Transverse colon (tissue), 4 donors: ENCODE measurements at regions of chr17 and their contacts with region 1.

Region 1: GRCh38 chr17:28252436-28252835 is 66.6 kb upstream of the TMEM97 start:
- DNase-seq: no peak
- H3K4me3 ChIP-seq: no peak overlapping the region
- H3K27ac ChIP-seq: no peak overlapping the region
- H3K4me1 ChIP-seq: peaks cover 4 to 8% (median 6%) of the 10 kb centered on the region in 4 donors
- H3K27me3 ChIP-seq: peaks cover 9% of the 10 kb centered on the region
- CTCF ChIP-seq: no peak
- EP300 ChIP-seq: no peak
- POLR2A ChIP-seq: no peak

Region 2: DNA sequence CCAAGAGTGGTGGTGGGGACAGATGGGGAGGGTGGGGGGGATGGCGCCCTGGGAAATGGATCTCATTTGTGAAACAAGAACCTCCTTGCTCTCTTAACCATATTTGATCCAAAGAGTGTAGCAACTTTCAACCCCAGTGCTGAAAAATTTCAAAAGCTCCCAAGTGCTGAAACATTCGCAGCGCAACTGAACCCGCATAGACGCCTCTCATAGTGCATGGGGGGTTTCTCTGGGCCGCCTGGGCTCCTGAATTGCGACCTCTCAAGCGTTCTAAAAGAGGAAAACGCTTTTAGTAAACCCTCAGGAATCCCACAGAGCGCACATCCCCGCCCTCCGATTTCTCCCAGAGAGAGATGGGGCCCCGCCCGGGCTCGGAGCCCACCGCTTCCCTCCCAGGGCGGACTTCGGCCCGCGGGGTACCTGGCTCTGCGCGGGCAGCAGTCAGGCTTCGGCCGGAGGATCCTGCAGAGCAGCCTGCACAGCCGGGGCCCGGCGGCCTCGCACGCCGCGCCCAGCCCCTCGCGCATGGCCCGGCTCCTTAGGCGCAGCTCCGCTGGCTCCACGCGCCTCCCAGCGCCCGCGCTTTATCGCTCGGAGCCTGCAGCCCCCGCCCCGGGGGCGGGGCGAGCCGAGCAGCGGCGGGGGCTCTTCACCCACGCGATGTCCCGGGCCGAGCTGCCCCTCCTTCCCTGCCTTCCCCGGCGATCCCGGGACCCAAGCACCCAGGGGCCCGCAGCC is 459.1 kb before region 1 on chr17:
- in situ Hi-C with region 1: loop called (anchors 25 kb)
- intact Hi-C with region 1: no loop called
- DNase-seq: no peak
- H3K4me3 ChIP-seq: peak overlapping the region in 2 of 4 donors; percentile 28 to 42
- H3K27ac ChIP-seq: no peak overlapping the region
- H3K4me1 ChIP-seq: peaks cover 0 to 20% (median 11%) of the 10 kb centered on the region in 4 donors
- H3K27me3 ChIP-seq: peaks cover 30% of the 10 kb centered on the region
- CTCF ChIP-seq: no peak
- EP300 ChIP-seq: no peak
- POLR2A ChIP-seq: no peak

Region 3: GRCh38 chr17:27805520-27806146 is 446.8 kb before region 1 on chr17:
- in situ Hi-C with region 1: no loop called
- intact Hi-C with region 1: loop called (anchors 10 kb)
- DNase-seq: peak; percentile 89
- H3K4me3 ChIP-seq: peak overlapping the region in 2 of 4 donors; percentile 12 to 35
- H3K27ac ChIP-seq: peak overlapping the region; percentile 46 to 60 (median 58)
- H3K4me1 ChIP-seq: peaks cover 5 to 34% (median 19%) of the 10 kb centered on the region in 4 donors
- H3K27me3 ChIP-seq: no peaks in the 10 kb centered on the region
- CTCF ChIP-seq: peak; percentile 82 to 96 (median 85)
- EP300 ChIP-seq: no peak
- POLR2A ChIP-seq: no peak

Region 4: DNA sequence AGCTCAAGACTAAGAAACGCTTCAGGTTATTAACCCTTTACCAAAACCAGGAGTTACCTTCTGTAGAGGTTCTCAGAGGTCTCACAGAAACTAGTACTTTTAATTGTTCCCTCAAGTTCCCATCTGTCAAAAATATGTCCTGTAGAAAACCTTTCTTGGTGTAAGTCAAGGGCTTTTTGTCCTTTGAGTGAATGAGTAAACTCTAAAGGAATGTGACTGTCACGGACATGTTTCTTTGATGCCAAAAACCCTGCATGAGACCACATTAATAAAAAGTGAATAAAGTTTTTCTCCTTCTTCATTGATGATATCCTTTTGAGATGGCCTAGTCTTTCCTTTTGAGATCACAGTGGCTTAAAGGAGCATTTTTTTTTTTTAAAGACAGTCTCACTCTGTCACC is 107.1 kb before region 1 on chr17:
- in situ Hi-C with region 1: no loop called
- intact Hi-C with region 1: no loop called
- DNase-seq: no peak
- H3K4me3 ChIP-seq: no peak overlapping the region
- H3K27ac ChIP-seq: no peak overlapping the region
- H3K4me1 ChIP-seq: no peaks in the 10 kb centered on the region
- H3K27me3 ChIP-seq: no peaks in the 10 kb centered on the region
- CTCF ChIP-seq: no peak
- EP300 ChIP-seq: no peak
- POLR2A ChIP-seq: no peak

Region 5: DNA sequence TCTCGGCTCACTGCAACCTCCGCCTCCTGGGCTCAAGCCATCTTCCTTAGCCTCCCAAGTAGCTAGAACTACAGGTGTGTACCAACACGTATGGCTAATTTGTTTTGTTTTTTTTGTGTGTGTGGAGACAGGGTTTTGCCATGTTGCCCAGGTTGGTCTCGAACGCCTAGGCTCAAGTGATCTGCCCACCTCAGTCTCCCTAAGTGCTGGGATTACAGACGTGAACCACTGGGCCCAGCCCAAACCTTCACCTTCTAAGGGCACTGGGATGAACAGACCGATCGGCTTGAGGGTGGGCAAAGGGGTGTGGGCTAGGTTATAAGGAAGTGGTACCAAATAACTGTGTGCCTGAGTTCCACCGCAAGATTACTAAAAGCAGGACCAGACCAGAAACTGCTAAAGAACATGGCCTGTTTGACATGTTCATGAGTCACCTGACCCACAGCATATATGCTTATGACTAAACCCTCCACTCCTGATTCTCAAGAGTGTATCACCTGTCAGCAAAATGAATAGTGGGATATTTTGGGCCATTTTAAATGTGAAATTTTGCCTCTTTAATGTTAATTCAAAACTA is 74.7 kb after region 1 on chr17:
- in situ Hi-C with region 1: no loop called
- intact Hi-C with region 1: no loop called
- DNase-seq: no peak
- H3K4me3 ChIP-seq: no peak overlapping the region
- H3K27ac ChIP-seq: no peak overlapping the region
- H3K4me1 ChIP-seq: peaks cover 0 to 22% (median 3%) of the 10 kb centered on the region in 4 donors
- H3K27me3 ChIP-seq: no peaks in the 10 kb centered on the region
- CTCF ChIP-seq: no peak
- EP300 ChIP-seq: no peak
- POLR2A ChIP-seq: no peak